Caco-2 (cell line): ENCODE measurements at regions of chr6 and their contacts with region 1.

Region 1: GRCh38 chr6:158686791-158687381 is 37.0 kb downstream of the SYTL3 start:
- DNase-seq: no peak
- H3K4me3 ChIP-seq: no peak overlapping the region
- H3K4me3 Mint-ChIP-seq: no peak overlapping the region
- H3K27ac Mint-ChIP-seq: peak overlapping the region; percentile 3
- H3K4me1 ChIP-seq: no peaks in the 10 kb centered on the region
- H3K4me1 Mint-ChIP-seq: peaks cover 11% of the 10 kb centered on the region
- H3K27me3 ChIP-seq: no peaks in the 10 kb centered on the region
- H3K27me3 Mint-ChIP-seq: no peaks in the 10 kb centered on the region
- CTCF ChIP-seq: no peak

Region 2: DNA sequence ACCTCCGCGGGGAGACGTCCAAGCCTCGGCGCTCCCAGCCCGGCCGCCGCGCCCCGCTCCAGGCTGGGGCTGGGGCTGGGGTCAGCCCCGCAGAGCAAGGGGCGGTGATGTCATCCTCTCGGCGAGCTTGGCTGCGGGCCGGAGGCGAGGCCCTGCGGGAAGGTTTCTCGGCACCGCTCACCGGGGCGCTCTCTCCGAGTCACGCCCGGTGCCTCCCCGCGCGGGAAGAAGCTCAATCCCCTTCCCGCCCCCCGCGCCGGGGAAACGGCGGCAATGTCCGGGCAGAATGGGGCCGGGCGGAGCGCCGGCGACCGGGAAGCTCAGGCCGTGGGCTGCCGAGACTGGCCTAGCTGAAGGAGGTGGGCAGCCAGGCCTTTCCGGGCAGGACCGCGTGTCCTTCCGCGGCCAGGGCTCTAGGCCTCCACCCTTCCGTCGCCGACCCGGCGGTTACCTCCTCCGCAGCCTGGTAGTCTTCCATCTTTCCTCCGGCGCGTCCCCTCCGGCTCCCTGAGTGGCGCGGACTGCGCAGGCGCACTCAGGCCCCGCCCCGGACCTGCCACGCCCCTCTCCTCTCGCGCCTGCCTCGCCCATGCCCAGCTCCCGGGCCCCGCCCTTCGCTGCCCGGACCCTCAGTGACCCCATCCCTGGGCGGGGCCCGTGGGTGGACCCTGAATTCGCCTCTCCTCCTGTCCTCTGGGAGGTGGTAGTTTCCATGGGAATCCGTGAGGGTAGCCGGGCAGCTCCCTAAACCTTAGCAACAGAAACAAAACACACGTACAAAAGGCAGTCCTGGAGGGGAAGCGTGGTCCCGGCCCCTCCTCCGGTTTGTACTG is 42.4 kb before region 1 on chr6 and contains the start of gene DYNLT1:
- CTCF ChIA-PET with region 1: interaction called, 20 read pairs
- POLR2A ChIA-PET with region 1: no interaction called
- intact Hi-C with region 1: loop called (anchors 1 kb)
- DNase-seq: peak; percentile 92 to 97
- H3K4me3 ChIP-seq: peak within 1 kb of the TSS; percentile 88
- H3K4me3 Mint-ChIP-seq: peak within 1 kb of the TSS; percentile 96
- H3K27ac Mint-ChIP-seq: peak within 1 kb of the TSS; percentile 94
- H3K4me1 ChIP-seq: peaks cover 19% of the 10 kb centered on the region
- H3K4me1 Mint-ChIP-seq: peaks cover 28% of the 10 kb centered on the region
- H3K27me3 ChIP-seq: no peaks in the 10 kb centered on the region
- H3K27me3 Mint-ChIP-seq: no peaks in the 10 kb centered on the region
- CTCF ChIP-seq: peak in 1 of 2 experiments; percentile 0
- total RNA-seq, gene DYNLT1: 95.6 and 96.6 TPM in 2 replicates

Region 3: GRCh38 chr6:158660333-158660754 is 26.5 kb before region 1 on chr6:
- CTCF ChIA-PET with region 1: interaction called, 22 read pairs
- POLR2A ChIA-PET with region 1: no interaction called
- intact Hi-C with region 1: loop called (anchors 1 kb)
- DNase-seq: peak in 1 of 2 experiments; percentile 50
- H3K4me3 ChIP-seq: no peak overlapping the region
- H3K4me3 Mint-ChIP-seq: no peak overlapping the region
- H3K27ac Mint-ChIP-seq: no peak overlapping the region
- H3K4me1 ChIP-seq: 0 out of 2 replicates have a peak, but pooled peaks cover 3% of the 10 kb centered on the region
- H3K4me1 Mint-ChIP-seq: peaks cover 7% of the 10 kb centered on the region
- H3K27me3 ChIP-seq: no peaks in the 10 kb centered on the region
- H3K27me3 Mint-ChIP-seq: no peaks in the 10 kb centered on the region
- CTCF ChIP-seq: peak; percentile 58 to 62

Region 4: GRCh38 chr6:158666628-158667359 is 20.1 kb before region 1 on chr6:
- CTCF ChIA-PET with region 1: interaction called, 3 read pairs
- POLR2A ChIA-PET with region 1: interaction called, 10 read pairs
- intact Hi-C with region 1: no loop called
- DNase-seq: no peak
- H3K4me3 ChIP-seq: no peak overlapping the region
- H3K4me3 Mint-ChIP-seq: no peak overlapping the region
- H3K27ac Mint-ChIP-seq: no peak overlapping the region
- H3K4me1 ChIP-seq: 0 out of 2 replicates have a peak, but pooled peaks cover 3% of the 10 kb centered on the region
- H3K4me1 Mint-ChIP-seq: no peaks in the 10 kb centered on the region
- H3K27me3 ChIP-seq: no peaks in the 10 kb centered on the region; the same call in 1 of the 2 replicates
- H3K27me3 Mint-ChIP-seq: no peaks in the 10 kb centered on the region
- CTCF ChIP-seq: no peak

Region 5: DNA sequence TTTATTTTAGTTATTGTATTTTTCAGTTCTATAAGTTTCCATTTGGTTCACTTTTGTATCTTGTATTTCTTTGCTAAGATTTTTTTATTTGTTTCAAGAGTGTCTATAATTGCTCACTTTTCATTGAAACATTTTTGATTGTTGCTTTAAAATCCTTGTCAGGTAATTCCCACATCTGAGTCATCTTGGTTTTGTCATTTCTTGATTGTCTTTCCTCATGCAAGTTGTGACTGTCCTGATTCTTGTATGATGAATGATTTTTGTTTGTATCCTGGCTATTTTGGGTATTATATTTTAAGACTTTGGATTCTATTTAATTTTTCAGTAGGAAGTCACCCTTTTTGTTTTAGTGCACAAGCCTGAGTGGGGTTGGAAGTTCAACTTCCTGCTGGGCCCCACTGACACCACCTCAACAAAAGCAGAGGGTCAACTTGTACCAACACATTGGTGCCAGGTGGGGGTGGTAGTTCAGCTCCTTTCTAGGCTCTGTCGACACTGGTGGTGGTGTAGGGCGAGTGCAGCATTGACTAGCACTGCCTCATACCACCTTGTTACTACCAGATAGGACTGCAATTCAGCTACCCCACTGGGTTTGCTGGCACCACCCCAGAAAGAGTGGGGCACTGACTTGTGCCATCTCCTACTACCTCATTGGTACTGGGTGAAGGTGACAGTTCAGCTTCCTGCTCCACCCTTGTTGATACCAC is 304.3 kb after region 1 on chr6:
- CTCF ChIA-PET with region 1: no interaction called
- POLR2A ChIA-PET with region 1: no interaction called
- intact Hi-C with region 1: no loop called
- DNase-seq: no peak
- H3K4me3 ChIP-seq: no peak overlapping the region
- H3K4me3 Mint-ChIP-seq: no peak overlapping the region
- H3K27ac Mint-ChIP-seq: no peak overlapping the region
- H3K4me1 ChIP-seq: no peaks in the 10 kb centered on the region
- H3K4me1 Mint-ChIP-seq: peaks cover 6% of the 10 kb centered on the region
- H3K27me3 ChIP-seq: no peaks in the 10 kb centered on the region
- H3K27me3 Mint-ChIP-seq: no peaks in the 10 kb centered on the region
- CTCF ChIP-seq: no peak